ENCODE measurements at regions of chr19 and their contacts with region 1.

Region 1: DNA sequence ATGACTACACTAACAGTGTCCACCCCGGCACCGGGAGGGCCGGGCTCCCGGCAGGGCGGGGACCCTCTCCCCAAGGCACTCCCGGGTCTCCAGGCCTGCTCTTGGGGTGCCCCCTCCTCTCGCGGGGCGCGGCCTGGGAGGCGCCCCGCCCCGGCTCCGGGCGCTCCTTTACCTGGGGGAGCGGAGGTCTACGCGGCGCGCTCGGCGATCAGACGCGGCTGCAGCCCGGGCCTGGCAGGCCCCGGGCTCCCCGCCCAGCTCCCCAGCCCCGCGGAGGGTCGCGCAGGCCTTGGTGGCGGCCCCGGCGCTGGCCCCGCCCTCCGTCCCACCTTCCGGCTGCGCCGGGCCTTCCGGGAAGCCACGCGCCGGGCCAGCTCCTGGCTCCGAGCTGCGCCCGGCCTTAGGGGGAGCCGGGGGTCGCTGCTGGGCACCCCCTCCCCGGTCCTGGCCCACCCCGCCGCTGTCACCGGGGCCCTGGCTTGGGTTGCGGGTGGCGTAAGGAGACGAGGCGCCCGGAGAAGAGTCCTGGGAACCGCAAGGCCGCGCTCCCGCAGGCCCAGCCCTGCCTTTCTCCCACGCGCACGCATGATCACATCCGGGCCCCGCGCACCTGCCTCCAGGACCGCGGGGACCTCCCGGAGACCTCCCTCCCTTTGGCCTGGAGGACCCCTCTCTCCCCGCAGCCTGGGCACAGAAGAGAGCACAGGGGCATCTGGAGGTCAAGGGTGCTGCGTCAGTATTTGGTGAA is at the start of gene C19orf12:
- DNase-seq: peak; percentile 22
- H3K4me3 ChIP-seq: peak within 1 kb of the TSS; percentile 93 to 98
- H3K27ac ChIP-seq: peak within 1 kb of the TSS; percentile 87 to 89
- H3K4me1 ChIP-seq: peaks cover 5% of the 10 kb centered on the region
- H3K27me3 ChIP-seq: no peaks in the 10 kb centered on the region
- CTCF ChIP-seq: no peak
- POLR2A ChIP-seq: peak; percentile 68
- total RNA-seq, gene C19orf12: 27.9 to 42.4 TPM

Region 2: GRCh38 chr19:29665215-29665825 is 49.8 kb before region 1 on chr19 and contains the start of gene PLEKHF1:
- intact Hi-C with region 1: loop called (anchors 10 kb)
- DNase-seq: peak; percentile 89
- H3K4me3 ChIP-seq: peak within 1 kb of the TSS; percentile 76 to 88
- H3K27ac ChIP-seq: peak within 1 kb of the TSS; percentile 89 to 91
- H3K4me1 ChIP-seq: peaks cover 24% of the 10 kb centered on the region
- H3K27me3 ChIP-seq: no peaks in the 10 kb centered on the region
- CTCF ChIP-seq: peak in 1 of 4 experiments; percentile 9
- POLR2A ChIP-seq: peak; percentile 89
- total RNA-seq, gene PLEKHF1: 64.3 to 64.4 TPM

Region 3: DNA sequence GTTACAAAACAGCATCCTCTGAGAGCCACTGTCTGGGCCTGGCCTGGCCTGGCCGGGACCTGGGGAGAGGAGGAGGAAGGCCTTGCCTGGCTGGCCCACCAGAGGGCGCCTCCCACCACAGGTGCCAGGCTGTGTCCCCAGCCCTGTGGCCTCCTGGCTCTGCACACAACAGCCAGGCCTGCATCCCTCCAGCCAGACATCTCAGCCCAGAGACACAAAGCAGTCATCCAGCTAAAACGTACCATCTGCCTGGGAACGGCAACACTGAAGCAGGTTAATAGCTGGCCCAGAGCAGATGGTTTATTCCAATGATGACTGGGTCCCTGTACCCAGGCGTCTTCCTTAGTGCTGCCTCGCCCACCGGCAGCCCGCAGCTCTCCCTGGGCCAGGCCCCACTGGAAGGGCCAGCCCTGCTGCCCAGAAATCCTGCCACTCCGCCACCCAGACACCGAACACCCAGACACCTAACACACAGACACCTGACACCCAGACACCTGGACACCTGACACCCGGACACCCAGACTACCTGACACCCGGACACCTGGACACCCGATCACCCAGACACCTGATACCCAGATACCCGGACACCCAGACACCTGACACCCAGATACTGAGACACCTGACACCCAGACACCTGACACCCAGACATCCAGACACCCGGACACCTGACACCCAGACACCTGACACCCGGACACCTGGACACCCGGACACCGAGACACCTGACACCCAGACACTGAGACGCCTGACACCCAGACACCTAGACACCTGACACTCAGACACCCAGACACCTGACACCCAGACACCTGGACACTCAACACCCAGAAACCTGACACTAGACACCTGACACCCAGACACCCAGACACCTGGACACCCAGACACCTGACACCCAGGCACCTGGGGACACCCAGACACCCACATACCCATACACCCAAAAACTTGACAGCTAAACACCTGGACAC is 20.2 kb before region 1 on chr19:
- intact Hi-C with region 1: loop called (anchors 2 kb)
- DNase-seq: peak; percentile 70
- H3K4me3 ChIP-seq: no peak overlapping the region
- H3K27ac ChIP-seq: peak overlapping the region in 1 of 2 donors; percentile 13
- H3K4me1 ChIP-seq: no peaks in the 10 kb centered on the region
- H3K27me3 ChIP-seq: no peaks in the 10 kb centered on the region
- CTCF ChIP-seq: peak; percentile 57 to 84 (median 76)
- POLR2A ChIP-seq: no peak

Measured in prostate gland (tissue), 2 donors.